ENCODE measurements at regions of chr1 and their contacts with region 1.

Region 1: DNA sequence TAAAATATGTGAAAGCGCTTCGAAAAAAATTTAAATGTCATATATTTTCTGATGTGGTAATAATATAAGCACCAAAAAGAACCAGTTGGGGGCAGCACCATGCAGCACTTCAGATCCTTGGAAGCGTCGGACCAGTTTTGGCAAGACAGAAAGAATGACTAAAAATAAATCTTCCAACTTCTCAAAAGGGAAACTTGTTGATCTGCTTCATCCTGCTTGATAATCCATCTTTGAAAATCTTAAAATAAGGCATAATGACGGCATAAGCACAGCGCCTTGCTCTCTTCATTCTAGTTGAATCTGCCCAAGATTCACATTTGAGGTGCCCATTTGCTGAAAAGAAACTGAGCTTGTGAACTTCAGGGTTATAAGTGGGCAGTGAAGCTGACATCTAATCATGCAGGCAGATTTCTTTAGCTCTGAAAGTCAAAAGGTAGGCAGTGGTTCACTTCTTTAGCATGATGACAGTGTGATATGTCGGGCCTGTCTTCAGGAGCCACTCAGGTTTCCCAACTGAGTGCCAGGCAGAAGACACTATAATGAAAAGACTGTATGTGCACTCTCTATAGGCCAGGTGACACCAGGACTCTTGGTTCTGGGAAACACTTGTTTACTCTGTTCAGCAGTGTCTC is 19.8 kb upstream of the MUTYH start:
- DNase-seq: no peak
- H3K4me3 ChIP-seq: no peak overlapping the region
- H3K27me3 ChIP-seq: no peaks in the 10 kb centered on the region
- CTCF ChIP-seq: peak; percentile 70

Region 2: GRCh38 chr1:45334308-45335245 is 25.4 kb before region 1 on chr1:
- CTCF ChIA-PET with region 1: no interaction called
- POLR2A ChIA-PET with region 1: no interaction called
- DNase-seq: no peak
- H3K4me3 ChIP-seq: no peak overlapping the region
- H3K27me3 ChIP-seq: no peaks in the 10 kb centered on the region
- CTCF ChIP-seq: no peak

Region 3: GRCh38 chr1:45348716-45349677 is 11.0 kb before region 1 on chr1:
- CTCF ChIA-PET with region 1: interaction called, 48 read pairs
- POLR2A ChIA-PET with region 1: no interaction called
- DNase-seq: no peak
- H3K4me3 ChIP-seq: no peak overlapping the region
- H3K27me3 ChIP-seq: no peaks in the 10 kb centered on the region
- CTCF ChIP-seq: no peak

Region 4: GRCh38 chr1:45499415-45499769 is 139.4 kb after region 1 on chr1:
- CTCF ChIA-PET with region 1: interaction called, 173 read pairs
- POLR2A ChIA-PET with region 1: no interaction called
- DNase-seq: no peak
- H3K4me3 ChIP-seq: peak overlapping the region; percentile 70
- H3K27me3 ChIP-seq: no peaks in the 10 kb centered on the region
- CTCF ChIP-seq: no peak

Measured in BJ (cell line).